Mammary epithelial cell (primary cell): ENCODE measurements at regions of chr1 and their contacts with region 1.

Region 1: GRCh38 chr1:20376880-20377494 is 86.3 kb downstream of the VWA5B1 start:
- DNase-seq: peak; percentile 28
- H3K4me3 ChIP-seq: no peak overlapping the region
- H3K27ac ChIP-seq: no peak overlapping the region
- H3K4me1 ChIP-seq: peaks cover 29% of the 10 kb centered on the region
- H3K27me3 ChIP-seq: no peaks in the 10 kb centered on the region
- CTCF ChIP-seq: peak; percentile 82 to 86

Region 2: DNA sequence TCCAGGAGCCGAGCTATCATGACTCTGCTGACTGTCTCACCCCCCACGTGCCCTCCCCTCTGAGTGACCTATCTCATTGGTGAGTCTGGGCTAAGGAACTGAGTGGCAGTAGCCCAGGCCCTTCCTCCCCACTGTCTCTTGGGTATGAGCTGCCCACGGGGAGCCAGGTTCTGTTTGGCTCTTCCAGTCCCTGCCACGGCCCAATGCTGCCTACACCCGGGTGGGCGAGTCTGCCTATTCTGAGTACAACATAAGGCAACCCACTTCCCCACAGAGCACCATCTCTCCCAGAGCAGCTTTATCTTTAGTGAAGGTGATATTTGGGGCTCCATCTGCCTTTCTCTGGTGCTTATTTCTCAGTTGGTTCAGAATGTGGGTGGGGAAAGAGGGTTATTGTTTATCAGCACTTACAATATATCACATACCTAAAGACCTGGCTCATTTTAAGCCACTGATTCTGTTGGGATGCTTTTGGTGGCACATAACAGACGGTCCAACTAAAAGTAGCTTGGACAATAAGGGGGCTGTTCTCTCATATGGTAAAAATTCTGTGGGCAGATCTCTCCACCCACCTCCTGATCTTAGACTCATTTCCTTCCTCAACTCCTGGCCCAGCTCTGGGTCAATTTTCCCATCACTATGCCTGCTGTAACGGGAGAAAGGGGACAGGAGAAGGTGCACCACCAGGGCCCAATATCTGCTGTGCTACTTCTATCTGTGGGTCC is 114.0 kb before region 1 on chr1:
- CTCF ChIA-PET with region 1: no interaction called
- dilution Hi-C with region 1: no loop called
- in situ Hi-C with region 1: no loop called
- intact Hi-C with region 1: no loop called
- DNase-seq: no peak
- H3K4me3 ChIP-seq: no peak overlapping the region
- H3K27ac ChIP-seq: no peak overlapping the region
- H3K4me1 ChIP-seq: no peaks in the 10 kb centered on the region
- H3K27me3 ChIP-seq: no peaks in the 10 kb centered on the region
- CTCF ChIP-seq: no peak

Region 3: GRCh38 chr1:20469406-20470076 is 92.6 kb after region 1 on chr1:
- CTCF ChIA-PET with region 1: no interaction called
- dilution Hi-C with region 1: loop called (anchors 10 kb)
- in situ Hi-C with region 1: no loop called
- intact Hi-C with region 1: no loop called
- DNase-seq: no peak
- H3K4me3 ChIP-seq: no peak overlapping the region
- H3K27ac ChIP-seq: no peak overlapping the region
- H3K4me1 ChIP-seq: no peaks in the 10 kb centered on the region
- H3K27me3 ChIP-seq: no peaks in the 10 kb centered on the region
- CTCF ChIP-seq: peak in 1 of 2 donors; percentile 3